MCF 10A (cell line): ENCODE measurements at regions of chr9 and their contacts with region 1.

Region 1: GRCh38 chr9:101387871-101388506 is 3.2 kb upstream of the BAAT start:
- DNase-seq: peak; percentile 56
- H3K4me3 Mint-ChIP-seq: no peak overlapping the region
- H3K27ac Mint-ChIP-seq: no peak overlapping the region
- H3K4me1 Mint-ChIP-seq: peaks cover 18% of the 10 kb centered on the region
- H3K27me3 Mint-ChIP-seq: no peaks in the 10 kb centered on the region
- CTCF ChIP-seq: peak; percentile 58

Region 2: DNA sequence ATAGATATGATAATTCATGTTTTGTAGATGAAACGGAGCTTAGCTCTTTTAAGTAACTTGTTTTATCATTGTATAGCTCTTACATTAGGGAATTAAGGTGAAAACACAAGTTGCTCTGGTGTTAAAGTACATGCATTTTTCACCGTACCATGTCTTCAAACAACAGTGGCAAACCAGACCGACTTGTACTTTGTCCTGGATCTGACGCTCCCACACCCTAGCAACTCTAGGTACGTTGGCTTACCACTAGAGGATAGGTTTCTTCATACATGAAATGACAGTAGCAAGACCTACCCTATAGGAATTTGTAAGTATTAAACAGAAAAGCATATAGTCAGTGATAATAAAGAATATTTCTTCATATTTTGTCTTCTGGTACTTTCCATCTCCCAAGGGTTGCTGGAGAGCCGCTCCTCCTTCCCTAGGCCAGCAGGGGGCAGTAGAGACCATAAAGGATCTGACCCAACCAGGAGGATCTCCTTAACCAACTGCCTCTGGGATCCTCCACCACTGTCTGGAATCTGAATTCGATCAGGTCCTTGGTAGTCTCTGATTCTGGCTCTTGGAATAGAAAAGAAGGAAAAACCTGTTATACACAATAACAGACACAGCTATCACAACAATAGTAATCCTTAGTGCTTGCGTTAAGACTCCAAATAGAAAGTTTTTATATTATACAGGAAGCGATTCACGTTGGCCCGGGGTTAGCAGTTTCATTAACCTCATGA is 673.5 kb before region 1 on chr9:
- CTCF ChIA-PET with region 1: interaction called, 7 read pairs
- POLR2A ChIA-PET with region 1: interaction called, 3 read pairs
- intact Hi-C with region 1: loop called (anchors 10 kb)
- DNase-seq: peak; percentile 77
- H3K4me3 Mint-ChIP-seq: no peak overlapping the region
- H3K27ac Mint-ChIP-seq: no peak overlapping the region
- H3K4me1 Mint-ChIP-seq: no peaks in the 10 kb centered on the region
- H3K27me3 Mint-ChIP-seq: peaks cover under 1% of the 10 kb centered on the region
- CTCF ChIP-seq: peak; percentile 89

Region 3: GRCh38 chr9:101311758-101312420 is 76.1 kb before region 1 on chr9:
- CTCF ChIA-PET with region 1: interaction called, 13 read pairs
- POLR2A ChIA-PET with region 1: no interaction called
- intact Hi-C with region 1: loop called (anchors 1 kb)
- DNase-seq: peak; percentile 84
- H3K4me3 Mint-ChIP-seq: no peak overlapping the region
- H3K27ac Mint-ChIP-seq: no peak overlapping the region
- H3K4me1 Mint-ChIP-seq: peaks cover 7% of the 10 kb centered on the region
- H3K27me3 Mint-ChIP-seq: peaks cover 11% of the 10 kb centered on the region
- CTCF ChIP-seq: peak; percentile 54

Region 4: GRCh38 chr9:101369286-101369685 is 18.7 kb before region 1 on chr9:
- CTCF ChIA-PET with region 1: interaction called, 42 read pairs
- POLR2A ChIA-PET with region 1: interaction called, 6 read pairs
- intact Hi-C with region 1: no loop called
- DNase-seq: no peak
- H3K4me3 Mint-ChIP-seq: no peak overlapping the region
- H3K27ac Mint-ChIP-seq: no peak overlapping the region
- H3K4me1 Mint-ChIP-seq: peaks cover 7% of the 10 kb centered on the region
- H3K27me3 Mint-ChIP-seq: no peaks in the 10 kb centered on the region
- CTCF ChIP-seq: no peak

Region 5: DNA sequence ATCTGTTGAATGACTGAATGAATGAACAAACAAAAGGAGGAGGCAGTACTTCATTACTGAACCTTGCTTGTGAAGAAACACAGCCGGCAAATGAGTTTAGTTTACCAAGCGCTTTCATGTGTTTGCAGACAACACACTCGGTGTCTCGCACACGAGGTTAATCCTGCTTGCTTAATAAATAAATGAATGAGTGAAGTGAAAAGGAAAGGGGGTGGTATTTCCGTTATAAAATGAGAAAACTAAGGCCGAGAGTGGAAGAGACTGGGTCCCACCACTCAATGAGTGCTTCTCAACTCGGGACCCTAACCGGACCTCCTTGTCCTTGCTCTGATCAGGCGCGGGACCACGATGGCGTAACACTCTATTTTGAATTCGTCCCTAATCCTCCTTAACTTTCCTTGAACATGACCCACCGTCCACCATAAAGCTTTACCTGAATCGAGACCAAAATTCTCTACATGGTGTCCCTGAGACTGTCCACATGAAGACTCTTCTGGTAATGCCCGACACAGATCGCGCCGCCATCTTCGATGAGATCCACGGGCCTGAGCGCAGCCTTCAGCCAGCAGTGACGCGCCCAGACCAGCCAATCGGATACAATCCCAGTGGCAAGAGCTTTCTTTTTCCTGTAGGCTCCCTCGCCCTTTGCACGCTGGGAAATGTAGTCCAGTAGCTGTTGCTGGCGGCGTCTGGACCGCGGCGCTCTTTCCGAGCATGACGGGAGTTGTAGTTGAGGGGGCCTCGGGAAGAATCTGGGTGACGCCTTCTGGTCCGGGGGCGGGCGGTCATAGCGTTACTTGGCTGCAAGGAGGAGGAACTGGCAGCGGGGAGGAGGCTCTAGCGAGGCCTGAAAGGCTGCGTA is 10.3 kb after region 1 on chr9 and contains the starts of genes MRPL50 and ZNF189:
- CTCF ChIA-PET with region 1: interaction called, 14 read pairs
- POLR2A ChIA-PET with region 1: interaction called, 34 read pairs
- intact Hi-C with region 1: no loop called
- DNase-seq: peak; percentile 99
- H3K4me3 Mint-ChIP-seq: peak within 1 kb of the TSS; percentile 97
- H3K27ac Mint-ChIP-seq: peak within 1 kb of the TSS; percentile 99
- H3K4me1 Mint-ChIP-seq: peaks cover 39% of the 10 kb centered on the region
- H3K27me3 Mint-ChIP-seq: no peaks in the 10 kb centered on the region
- CTCF ChIP-seq: no peak
- total RNA-seq, gene MRPL50: 15.4 and 16.9 TPM in 2 replicates
- total RNA-seq, gene ZNF189: 17.4 and 20.4 TPM in 2 replicates